ENCODE measurements at regions of chr17 and their contacts with region 1.

Region 1: DNA sequence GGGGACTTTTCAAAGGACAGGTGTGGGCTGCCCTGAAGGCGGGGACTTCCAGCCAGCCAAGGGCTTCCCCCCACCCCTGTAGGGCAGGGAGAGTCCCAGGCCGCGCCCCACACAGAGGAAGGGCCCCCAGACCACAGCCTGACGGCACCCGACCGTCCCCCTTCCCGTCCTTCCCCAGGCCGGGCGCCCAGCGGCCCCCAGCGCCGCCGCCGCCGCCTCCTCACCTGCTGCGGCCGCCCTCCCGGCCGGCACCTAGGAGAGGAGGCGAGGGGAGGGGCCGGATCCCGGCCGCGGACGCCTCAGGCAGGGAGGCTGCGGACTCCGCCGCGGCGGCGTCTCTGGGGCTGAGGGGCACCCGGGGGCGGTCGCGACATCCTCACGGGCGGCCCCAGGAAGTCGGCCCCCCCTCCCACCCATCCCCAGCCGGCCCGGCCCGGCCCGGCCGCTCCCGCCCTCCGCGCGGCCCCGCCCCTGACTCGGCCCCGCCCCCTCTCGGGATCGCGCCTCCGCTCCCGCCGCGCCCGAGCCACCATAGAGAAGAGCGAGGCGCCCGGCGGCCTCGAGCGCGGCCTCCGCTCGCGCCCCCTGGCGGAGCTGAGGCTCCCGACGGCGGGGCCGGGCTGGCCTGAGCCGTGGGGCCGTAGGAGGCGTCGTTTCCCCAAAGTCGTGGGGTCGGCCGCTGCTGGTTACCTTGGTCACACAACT is 25.5 kb upstream of the RFFL start:
- DNase-seq: peak; percentile 91 to 96 (median 94)
- ATAC-seq: peak; percentile 89
- H3K4me3 ChIP-seq: peak overlapping the region; percentile 87
- H3K27ac ChIP-seq: peak overlapping the region; percentile 78
- H3K4me1 ChIP-seq: peaks cover 19 to 22% of the 10 kb centered on the region in 2 experiments
- H3K27me3 ChIP-seq: no peaks in the 10 kb centered on the region
- CTCF ChIP-seq: peak; percentile 79 to 97 (median 87)
- EP300 ChIP-seq: peak; percentile 12; the same call in 1 of the 2 replicates
- POLR2A ChIP-seq: no peak
- RAD21 ChIP-seq: peak in 1 of 2 experiments; percentile 64; a peak in 3 of 4 replicates

Region 2: GRCh38 chr17:34998205-34998604 is 90.8 kb before region 1 on chr17:
- CTCF ChIA-PET with region 1: interaction called, 5 read pairs
- POLR2A ChIA-PET with region 1: interaction called, 4 read pairs
- in situ Hi-C with region 1: loop called (anchors 5 kb)
- intact Hi-C with region 1: loop called (anchors 5 kb)
- DNase-seq: peak; percentile 74 to 86 (median 78)
- ATAC-seq: peak; percentile 94
- H3K4me3 ChIP-seq: no peak overlapping the region
- H3K27ac ChIP-seq: no peak overlapping the region
- H3K4me1 ChIP-seq: peaks cover 3 to 11% of the 10 kb centered on the region in 2 experiments; a peak in 3 of 5 replicates
- H3K27me3 ChIP-seq: no peaks in the 10 kb centered on the region
- CTCF ChIP-seq: peak; percentile 87 to 91 (median 88)
- EP300 ChIP-seq: no peak
- POLR2A ChIP-seq: no peak
- RAD21 ChIP-seq: peak; percentile 86 to 95

Region 3: DNA sequence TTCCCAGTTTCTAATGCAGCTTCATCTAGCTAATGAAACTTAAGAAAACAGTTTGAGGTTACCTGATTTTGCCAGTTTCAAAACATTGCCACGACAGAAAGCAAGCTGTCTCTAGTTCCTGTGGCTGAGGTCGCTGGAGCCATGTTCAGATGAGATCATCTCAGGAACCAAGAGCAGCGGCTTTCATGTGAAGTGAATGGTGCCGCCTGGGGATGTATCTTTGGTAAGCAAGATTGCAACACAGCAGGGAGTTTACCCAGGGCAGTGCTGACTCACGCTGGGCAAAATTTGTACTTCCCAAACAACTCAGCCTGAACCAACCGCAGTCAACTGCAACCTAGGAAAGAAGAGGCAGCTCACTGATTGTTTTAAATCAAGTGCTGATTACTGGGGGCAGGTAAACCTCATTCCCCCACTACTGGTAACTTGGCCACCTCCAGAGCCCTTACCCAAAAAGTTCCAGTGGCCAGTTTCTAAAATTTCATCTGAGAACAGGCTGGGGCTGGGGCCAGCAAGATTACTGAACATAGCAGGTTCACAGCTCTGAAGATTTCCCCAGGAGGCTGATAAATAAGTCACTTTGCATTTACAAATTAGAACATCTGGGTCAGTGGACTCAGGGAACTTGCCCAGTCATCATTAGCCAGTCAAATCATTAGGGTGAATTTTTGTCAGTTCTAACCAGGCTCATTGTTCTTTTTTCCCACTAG is 25.4 kb before region 1 on chr17 and contains the start of gene RFFL:
- CTCF ChIA-PET with region 1: no interaction called
- POLR2A ChIA-PET with region 1: interaction called, 13 read pairs
- in situ Hi-C with region 1: no loop called
- intact Hi-C with region 1: loop called (anchors 2 kb)
- DNase-seq: peak; percentile 82 to 90 (median 83)
- ATAC-seq: peak; percentile 92
- H3K4me3 ChIP-seq: no peak within 1 kb of the TSS; the same call in 1 of the 2 replicates
- H3K27ac ChIP-seq: peak within 1 kb of the TSS; percentile 82
- H3K4me1 ChIP-seq: peaks cover 31 to 41% of the 10 kb centered on the region in 2 experiments
- H3K27me3 ChIP-seq: no peaks in the 10 kb centered on the region
- CTCF ChIP-seq: peak; percentile 13 to 66 (median 51); a peak in 3 of 6 replicates
- EP300 ChIP-seq: peak; percentile 47; the same call in 1 of the 2 replicates
- POLR2A ChIP-seq: peak; percentile 44; the same call in 1 of the 2 replicates
- RAD21 ChIP-seq: peak; percentile 53 to 68
- polyA plus RNA-seq, gene RFFL: 3.4 to 3.7 TPM